GM10248 (cell line): ENCODE measurements at regions of chr12 and their contacts with region 1.

Region 1: GRCh38 chr12:49644620-49644994 is 21.2 kb downstream of the PRPF40B start:
- DNase-seq: peak; percentile 87
- CTCF ChIP-seq: peak; percentile 88

Region 2: GRCh38 chr12:49662998-49663843 is 18.6 kb after region 1 on chr12:
- CTCF ChIA-PET with region 1: interaction called, 25 read pairs
- POLR2A ChIA-PET with region 1: no interaction called
- DNase-seq: peak; percentile 87
- CTCF ChIP-seq: no peak

Region 3: DNA sequence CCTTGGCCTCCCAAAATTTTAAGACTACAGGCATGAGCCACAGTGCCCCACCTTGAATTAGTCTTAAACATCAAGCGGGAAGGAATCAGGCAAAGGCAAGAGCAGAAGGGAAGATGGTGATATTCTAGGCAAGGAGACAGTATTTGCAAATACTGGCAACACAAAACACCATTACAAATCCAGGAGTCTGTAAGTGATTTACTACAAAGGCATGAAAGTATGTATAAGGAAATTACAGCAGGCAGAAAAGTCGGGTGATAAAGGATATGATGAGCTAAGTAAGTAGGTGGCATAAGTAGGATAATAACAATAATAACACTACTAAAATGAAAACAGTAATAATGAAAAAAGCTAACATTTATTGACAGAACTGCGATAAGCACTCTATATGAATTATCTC is 34.1 kb after region 1 on chr12:
- CTCF ChIA-PET with region 1: interaction called, 29 read pairs
- POLR2A ChIA-PET with region 1: no interaction called
- DNase-seq: no peak
- CTCF ChIP-seq: no peak

Region 4: GRCh38 chr12:49707128-49707811 is 62.7 kb after region 1 on chr12 and contains the start of gene FMNL3:
- CTCF ChIA-PET with region 1: interaction called, 350 read pairs
- POLR2A ChIA-PET with region 1: no interaction called
- DNase-seq: peak; percentile 99
- CTCF ChIP-seq: peak; percentile 91

Region 5: DNA sequence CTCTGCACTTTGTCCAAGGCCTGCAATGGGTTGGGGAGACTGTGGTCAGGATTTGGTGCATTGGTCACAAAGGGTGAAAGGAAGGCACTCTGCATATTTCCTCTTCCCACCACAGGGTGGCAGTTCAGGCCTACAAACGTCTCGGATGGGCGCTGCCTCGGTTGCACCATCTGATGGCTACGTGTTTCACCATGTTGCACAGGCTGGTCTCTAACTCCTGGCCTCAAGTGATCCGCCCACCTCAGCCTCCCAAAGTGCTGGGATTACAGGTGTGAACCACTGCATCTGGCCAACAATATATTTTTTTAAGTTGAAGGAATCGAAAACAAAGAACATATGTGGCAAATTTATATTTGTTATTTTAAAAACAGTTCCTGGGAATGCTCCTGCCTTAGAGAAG is 131.8 kb after region 1 on chr12:
- CTCF ChIA-PET with region 1: interaction called, 10 read pairs
- POLR2A ChIA-PET with region 1: no interaction called
- DNase-seq: peak; percentile 78
- CTCF ChIP-seq: peak; percentile 79